ENCODE measurements at regions of chr20 and their contacts with region 1.

Region 1: GRCh38 chr20:52031563-52032303 is 159.8 kb downstream of the ZFP64 start:
- DNase-seq: peak in 3 of 9 donors; percentile 0 to 27 (median 19)
- ATAC-seq: peak; percentile 73
- H3K4me3 ChIP-seq: no peak overlapping the region
- H3K4me3 Mint-ChIP-seq: peak overlapping the region in 4 of 10 donors; percentile 4 to 44 (median 18)
- H3K27ac ChIP-seq: no peak overlapping the region
- H3K27ac Mint-ChIP-seq: peak overlapping the region in 4 of 9 donors; percentile 5 to 56 (median 27)
- H3K4me1 ChIP-seq: peaks cover 5 to 24% of the 10 kb centered on the region in 2 donors
- H3K4me1 Mint-ChIP-seq: peaks cover 0 to 22% (median 12%) of the 10 kb centered on the region in 7 donors
- H3K27me3 ChIP-seq: no peaks in the 10 kb centered on the region
- H3K27me3 Mint-ChIP-seq: no peaks in the 10 kb centered on the region

Region 2: DNA sequence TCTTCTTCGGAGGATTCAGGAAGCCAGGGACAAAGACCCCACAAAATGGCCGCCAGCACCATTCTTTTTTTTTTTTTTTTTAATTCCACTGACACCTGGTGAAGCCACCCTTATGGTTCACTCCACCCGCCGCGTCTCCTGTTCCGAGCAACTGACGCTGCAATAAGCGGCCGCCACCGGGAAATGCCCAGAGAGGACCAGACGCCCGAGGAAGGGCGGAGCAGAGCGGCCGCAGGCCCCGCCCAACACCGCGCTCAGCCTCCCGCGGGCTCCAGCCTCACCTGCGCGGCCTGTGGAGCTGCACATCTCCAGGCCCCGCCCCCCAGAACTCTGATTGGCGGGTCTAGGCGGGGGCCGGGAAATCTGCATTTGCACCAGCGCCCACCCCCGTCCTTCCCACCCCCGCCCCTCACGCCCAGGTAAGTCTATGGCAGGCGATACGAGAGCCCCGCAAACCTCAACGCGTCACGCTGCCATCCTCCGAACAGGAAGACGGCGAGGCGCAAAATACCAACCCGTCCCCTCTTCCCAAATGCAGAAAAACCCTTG is 264.6 kb before region 1 on chr20:
- CTCF ChIA-PET with region 1: no interaction called
- POLR2A ChIA-PET with region 1: no interaction called
- intact Hi-C with region 1: no loop called
- DNase-seq: peak in 1 of 9 donors; percentile 69
- ATAC-seq: peak; percentile 71
- H3K4me3 ChIP-seq: no peak overlapping the region
- H3K4me3 Mint-ChIP-seq: peak overlapping the region in 8 of 10 donors; percentile 17 to 76 (median 55)
- H3K27ac ChIP-seq: no peak overlapping the region
- H3K27ac Mint-ChIP-seq: no peak overlapping the region
- H3K4me1 ChIP-seq: peaks cover 0 to 4% of the 10 kb centered on the region in 2 donors
- H3K4me1 Mint-ChIP-seq: peaks cover 7 to 15% (median 9%) of the 10 kb centered on the region in 7 donors
- H3K27me3 ChIP-seq: no peaks in the 10 kb centered on the region
- H3K27me3 Mint-ChIP-seq: peaks cover 22 to 47% (median 26%) of the 10 kb centered on the region in 5 donors

Region 3: DNA sequence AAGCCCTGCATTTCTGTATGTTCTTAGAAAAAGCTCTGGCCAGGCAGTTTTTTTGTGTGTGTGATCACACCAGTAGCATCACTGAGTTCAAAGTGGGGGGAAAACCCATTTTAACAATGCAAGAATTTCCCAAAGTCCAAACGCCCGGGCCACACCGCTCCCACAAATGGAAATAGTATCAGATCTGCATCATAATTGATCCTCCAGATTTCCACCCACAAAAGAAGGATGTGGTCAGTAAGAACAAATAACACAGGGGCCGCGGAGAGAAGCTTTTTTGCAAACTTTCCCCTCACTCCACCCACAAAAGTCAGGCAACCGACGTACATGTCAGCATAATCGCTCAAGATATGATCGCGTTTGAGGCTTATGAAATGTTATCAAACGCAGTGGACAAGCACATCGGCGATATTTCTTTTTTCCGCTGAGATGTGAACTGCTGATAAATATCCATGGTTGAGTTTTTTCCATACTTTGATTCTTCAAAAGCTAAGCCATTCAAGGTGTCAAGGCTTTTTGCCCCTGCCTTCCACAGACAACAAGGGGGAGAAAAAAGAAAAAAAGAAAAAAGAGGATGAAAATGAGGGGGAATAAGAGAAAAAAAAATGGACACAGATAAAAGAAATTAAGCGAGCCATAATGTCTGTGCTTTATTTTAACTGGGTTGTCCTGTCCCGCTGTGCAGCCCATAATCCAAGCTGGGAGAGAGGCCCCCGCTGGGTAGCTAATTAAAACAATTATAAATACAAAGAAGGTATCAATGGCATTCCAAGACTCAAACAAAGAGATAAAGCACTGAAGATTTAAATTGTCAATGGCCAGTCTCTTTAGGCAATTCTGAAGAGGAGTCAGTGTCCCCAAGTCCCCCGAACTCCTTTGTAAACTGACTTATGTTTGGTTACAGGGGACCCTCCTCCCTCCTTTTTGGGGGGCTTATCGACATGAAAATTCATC is 16.4 kb after region 1 on chr20:
- CTCF ChIA-PET with region 1: no interaction called
- POLR2A ChIA-PET with region 1: no interaction called
- intact Hi-C with region 1: loop called in 1 of 2 experiments (anchors 1 kb)
- DNase-seq: peak in 3 of 9 donors; percentile 2 to 48 (median 6)
- ATAC-seq: peak; percentile 54
- H3K4me3 ChIP-seq: no peak overlapping the region
- H3K4me3 Mint-ChIP-seq: peak overlapping the region in 3 of 10 donors; percentile 19 to 55 (median 40)
- H3K27ac ChIP-seq: no peak overlapping the region
- H3K27ac Mint-ChIP-seq: peak overlapping the region in 2 of 9 donors; percentile 3 to 58
- H3K4me1 ChIP-seq: peaks cover 8 to 15% of the 10 kb centered on the region in 2 donors
- H3K4me1 Mint-ChIP-seq: peaks cover 7 to 20% (median 16%) of the 10 kb centered on the region in 7 donors
- H3K27me3 ChIP-seq: no peaks in the 10 kb centered on the region
- H3K27me3 Mint-ChIP-seq: peaks cover 0 to 16% (median 11%) of the 10 kb centered on the region in 5 donors

Region 4: DNA sequence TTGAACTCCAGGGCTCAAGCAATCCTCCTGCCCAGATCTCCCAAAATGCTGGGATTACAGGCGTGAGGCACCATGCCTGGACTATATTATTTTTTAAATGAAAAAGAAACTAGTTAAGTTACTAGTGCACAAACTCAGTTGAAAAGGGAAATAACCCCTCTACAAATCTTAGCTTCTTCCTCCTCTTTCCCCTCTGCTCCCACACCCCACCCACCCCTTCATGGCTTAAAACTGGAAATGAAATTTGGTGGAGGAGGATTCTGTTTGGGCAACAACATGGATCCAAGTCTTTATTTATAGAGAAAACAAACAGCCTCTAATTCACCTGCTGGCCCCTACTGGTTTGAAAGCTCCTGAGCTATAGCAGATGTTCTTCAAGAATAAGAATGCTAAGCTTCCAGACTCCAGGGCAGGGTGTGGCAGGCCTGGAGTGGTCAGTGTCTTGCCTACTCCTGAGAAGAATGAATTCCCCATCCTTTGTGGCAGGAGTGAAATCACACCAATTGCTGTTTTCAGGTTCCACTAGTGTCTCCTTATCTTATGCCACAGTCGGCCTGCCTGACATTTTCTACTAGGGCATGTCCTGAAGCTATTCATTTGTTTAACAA is 86.4 kb after region 1 on chr20:
- CTCF ChIA-PET with region 1: no interaction called
- POLR2A ChIA-PET with region 1: no interaction called
- intact Hi-C with region 1: no loop called
- DNase-seq: no peak
- ATAC-seq: no peak
- H3K4me3 ChIP-seq: no peak overlapping the region
- H3K4me3 Mint-ChIP-seq: no peak overlapping the region
- H3K27ac ChIP-seq: no peak overlapping the region
- H3K27ac Mint-ChIP-seq: no peak overlapping the region
- H3K4me1 ChIP-seq: no peaks in the 10 kb centered on the region
- H3K4me1 Mint-ChIP-seq: peaks cover 0 to 2% (median 0%) of the 10 kb centered on the region in 7 donors
- H3K27me3 ChIP-seq: no peaks in the 10 kb centered on the region
- H3K27me3 Mint-ChIP-seq: no peaks in the 10 kb centered on the region